MCF 10A (cell line): ENCODE measurements at regions of chr6 and their contacts with region 1.

Region 1: GRCh38 chr6:106556368-106556960 is 72.8 kb downstream of the RTN4IP1 start:
- DNase-seq: no peak
- H3K4me3 Mint-ChIP-seq: no peak overlapping the region
- H3K27ac Mint-ChIP-seq: no peak overlapping the region
- H3K4me1 Mint-ChIP-seq: peaks cover 23% of the 10 kb centered on the region
- H3K27me3 Mint-ChIP-seq: no peaks in the 10 kb centered on the region
- CTCF ChIP-seq: peak; percentile 38

Region 2: DNA sequence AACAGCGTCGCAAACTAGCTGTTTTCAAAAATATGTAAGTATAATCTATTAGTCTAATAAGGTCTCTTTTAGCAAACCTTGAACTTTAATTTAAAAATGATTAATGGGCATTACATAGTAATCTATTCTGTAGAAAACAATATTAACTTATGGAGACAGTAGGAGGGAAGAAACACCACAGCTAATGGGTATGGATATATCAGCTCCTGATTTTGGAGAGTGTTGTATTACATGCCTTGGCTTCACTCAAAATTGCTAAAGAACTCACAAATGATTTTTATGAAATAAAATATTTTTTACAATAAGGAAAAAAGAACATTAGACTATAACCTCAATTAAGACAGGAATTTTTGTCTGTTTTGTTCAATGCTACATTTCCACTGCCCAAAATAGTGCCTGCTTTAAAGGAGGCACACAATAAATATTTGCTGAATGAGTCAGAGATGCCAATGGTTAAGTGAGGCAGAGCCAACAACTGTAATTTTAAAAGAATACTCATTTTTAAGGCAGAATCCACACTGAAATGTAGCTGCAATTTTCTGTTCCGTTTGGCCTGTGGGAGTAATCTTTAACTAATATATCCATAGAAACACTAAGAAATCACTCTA is 246.6 kb before region 1 on chr6:
- CTCF ChIA-PET with region 1: no interaction called
- POLR2A ChIA-PET with region 1: no interaction called
- intact Hi-C with region 1: no loop called
- DNase-seq: peak; percentile 50
- H3K4me3 Mint-ChIP-seq: no peak overlapping the region
- H3K27ac Mint-ChIP-seq: peak overlapping the region; percentile 90
- H3K4me1 Mint-ChIP-seq: peaks cover 43% of the 10 kb centered on the region
- H3K27me3 Mint-ChIP-seq: no peaks in the 10 kb centered on the region
- CTCF ChIP-seq: no peak

Region 3: DNA sequence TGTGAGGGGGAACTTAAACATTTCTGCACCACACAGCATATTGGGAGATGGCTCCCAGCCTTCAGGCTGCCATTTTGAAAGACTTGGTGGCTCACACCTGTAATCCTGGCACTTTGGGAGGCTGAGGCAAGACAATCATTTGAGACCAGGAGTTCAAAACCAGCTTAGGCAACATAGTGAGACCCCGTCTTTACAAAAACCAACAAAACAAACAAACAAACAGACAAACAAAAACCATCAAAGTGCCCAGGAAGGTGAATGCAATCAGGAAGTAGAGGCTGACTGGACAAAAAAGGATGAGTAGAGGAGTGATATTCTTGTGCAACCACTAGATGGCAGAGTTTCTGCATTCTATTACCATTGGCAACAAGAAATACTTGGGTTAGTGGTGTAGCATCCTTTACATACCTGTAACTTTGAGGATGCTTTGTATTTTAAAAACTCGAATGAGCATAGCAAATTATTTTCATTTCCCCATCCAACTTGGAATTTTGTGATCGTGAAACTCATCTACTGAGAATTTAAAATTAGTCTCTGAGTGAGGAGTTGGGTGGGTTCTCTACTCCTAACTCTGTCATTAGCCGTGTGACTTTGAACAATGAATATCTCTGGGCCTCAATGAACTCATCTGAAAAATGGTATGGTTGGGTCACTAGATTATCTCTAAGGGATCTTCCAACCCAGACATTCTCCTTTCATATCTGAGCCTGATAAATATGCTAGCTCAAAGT is 111.5 kb before region 1 on chr6:
- CTCF ChIA-PET with region 1: interaction called, 404 read pairs
- POLR2A ChIA-PET with region 1: interaction called, 18 read pairs
- intact Hi-C with region 1: loop called (anchors 1 kb)
- DNase-seq: peak; percentile 79
- H3K4me3 Mint-ChIP-seq: no peak overlapping the region
- H3K27ac Mint-ChIP-seq: no peak overlapping the region
- H3K4me1 Mint-ChIP-seq: peaks cover 6% of the 10 kb centered on the region
- H3K27me3 Mint-ChIP-seq: no peaks in the 10 kb centered on the region
- CTCF ChIP-seq: peak; percentile 65

Region 4: GRCh38 chr6:106519460-106520394 is 36.7 kb before region 1 on chr6:
- CTCF ChIA-PET with region 1: interaction called, 5 read pairs
- POLR2A ChIA-PET with region 1: interaction called, 152 read pairs
- intact Hi-C with region 1: no loop called
- DNase-seq: peak; percentile 98
- H3K4me3 Mint-ChIP-seq: peak overlapping the region; percentile 45
- H3K27ac Mint-ChIP-seq: peak overlapping the region; percentile 87
- H3K4me1 Mint-ChIP-seq: peaks cover 37% of the 10 kb centered on the region
- H3K27me3 Mint-ChIP-seq: no peaks in the 10 kb centered on the region
- CTCF ChIP-seq: no peak

Region 5: GRCh38 chr6:106534564-106534982 is 21.9 kb before region 1 on chr6:
- CTCF ChIA-PET with region 1: interaction called, 4 read pairs
- POLR2A ChIA-PET with region 1: interaction called, 10 read pairs
- intact Hi-C with region 1: no loop called
- DNase-seq: no peak
- H3K4me3 Mint-ChIP-seq: no peak overlapping the region
- H3K27ac Mint-ChIP-seq: peak overlapping the region; percentile 74
- H3K4me1 Mint-ChIP-seq: peaks cover 32% of the 10 kb centered on the region
- H3K27me3 Mint-ChIP-seq: no peaks in the 10 kb centered on the region
- CTCF ChIP-seq: no peak

Region 6: DNA sequence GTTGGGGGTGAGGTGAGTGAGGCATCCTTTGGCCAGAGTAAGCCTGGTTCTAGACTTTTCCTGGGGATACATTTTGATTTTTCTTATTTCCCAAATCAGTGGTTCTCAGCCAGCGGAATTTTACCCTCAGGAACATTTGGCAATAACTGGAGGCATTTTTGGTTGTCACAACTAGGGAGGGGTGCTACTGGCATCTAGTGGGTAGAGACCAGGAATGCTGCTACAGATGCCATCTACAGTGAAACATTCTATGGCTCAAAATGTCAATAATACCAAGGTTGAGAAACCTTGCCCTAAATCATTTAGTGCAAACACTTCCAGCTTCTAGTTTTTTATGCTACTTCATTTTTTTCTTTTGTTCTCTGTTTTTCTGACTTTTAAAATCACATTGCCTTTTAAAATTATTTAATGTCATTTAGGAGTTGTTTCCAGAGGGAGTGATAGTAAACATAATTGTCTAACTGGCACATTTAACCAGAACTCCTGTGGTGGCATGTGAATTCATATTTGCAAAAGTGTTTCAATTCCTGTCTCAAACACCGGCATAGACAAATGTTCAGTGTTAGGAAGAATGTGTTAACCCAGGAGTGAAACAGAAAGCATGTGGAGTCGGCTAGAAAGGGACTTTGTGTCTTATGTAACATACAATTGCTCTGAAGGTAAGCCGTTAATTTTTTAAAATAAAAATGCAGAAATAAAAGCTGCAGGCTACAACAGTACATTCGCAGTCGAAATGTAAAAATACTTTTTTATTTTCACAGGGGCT is 131.9 kb after region 1 on chr6:
- CTCF ChIA-PET with region 1: no interaction called
- POLR2A ChIA-PET with region 1: no interaction called
- intact Hi-C with region 1: loop called (anchors 10 kb)
- DNase-seq: peak; percentile 48
- H3K4me3 Mint-ChIP-seq: no peak overlapping the region
- H3K27ac Mint-ChIP-seq: peak overlapping the region; percentile 8
- H3K4me1 Mint-ChIP-seq: peaks cover 20% of the 10 kb centered on the region
- H3K27me3 Mint-ChIP-seq: no peaks in the 10 kb centered on the region
- CTCF ChIP-seq: no peak

Region 7: GRCh38 chr6:107061125-107062020 is 504.9 kb after region 1 on chr6:
- CTCF ChIA-PET with region 1: no interaction called
- POLR2A ChIA-PET with region 1: no interaction called
- intact Hi-C with region 1: no loop called
- DNase-seq: no peak
- H3K4me3 Mint-ChIP-seq: no peak overlapping the region
- H3K27ac Mint-ChIP-seq: no peak overlapping the region
- H3K4me1 Mint-ChIP-seq: peaks cover 9% of the 10 kb centered on the region
- H3K27me3 Mint-ChIP-seq: no peaks in the 10 kb centered on the region
- CTCF ChIP-seq: no peak